Dendritic cell treated with granulocyte-macrophage colony-stimulating factor and Interleukin-4, amounts not matched to agents 40 ng/mL and 50 ng/mL, for 4 days (primary cell): ENCODE measurements at regions of chr19 and their contacts with region 1.

Region 1: GRCh38 chr19:37466798-37467607 is at the start of gene ZNF569:
- H3K4me3 Mint-ChIP-seq: peak within 1 kb of the TSS; percentile 96
- H3K27ac Mint-ChIP-seq: peak within 1 kb of the TSS; percentile 94
- H3K4me1 Mint-ChIP-seq: peaks cover 23% of the 10 kb centered on the region
- H3K27me3 Mint-ChIP-seq: no peaks in the 10 kb centered on the region

Region 2: GRCh38 chr19:36665832-36666231 is 801.2 kb before region 1 on chr19:
- intact Hi-C with region 1: loop called (anchors 5 kb)
- H3K4me3 Mint-ChIP-seq: peak overlapping the region; percentile 98
- H3K27ac Mint-ChIP-seq: peak overlapping the region; percentile 97
- H3K4me1 Mint-ChIP-seq: peaks cover 22% of the 10 kb centered on the region
- H3K27me3 Mint-ChIP-seq: no peaks in the 10 kb centered on the region

Region 3: DNA sequence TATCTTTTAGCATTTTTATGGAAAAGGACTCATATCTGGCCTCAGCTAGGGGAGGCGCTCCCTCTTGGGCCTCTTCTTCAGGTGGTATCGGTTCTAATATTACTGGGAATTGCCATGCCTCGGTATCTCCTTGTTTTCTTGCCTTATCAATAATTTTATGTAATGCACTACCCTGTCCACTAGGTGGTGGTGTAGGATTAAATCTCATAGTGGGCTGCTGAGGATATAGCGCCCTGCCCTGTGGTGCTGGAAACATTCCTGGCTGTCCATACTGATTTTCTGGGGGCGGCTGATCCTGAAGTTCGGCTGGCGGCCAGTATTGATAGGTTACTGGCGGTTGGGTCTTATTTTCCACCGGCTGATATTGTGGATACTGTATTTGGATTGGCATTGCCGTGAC is 353.0 kb before region 1 on chr19:
- intact Hi-C with region 1: no loop called
- H3K4me3 Mint-ChIP-seq: no peak overlapping the region
- H3K27ac Mint-ChIP-seq: no peak overlapping the region
- H3K4me1 Mint-ChIP-seq: no peaks in the 10 kb centered on the region
- H3K27me3 Mint-ChIP-seq: no peaks in the 10 kb centered on the region

Region 4: GRCh38 chr19:37217855-37218591 is 249.0 kb before region 1 on chr19 and contains the start of gene ZNF383:
- intact Hi-C with region 1: loop called (anchors 10 kb)
- H3K4me3 Mint-ChIP-seq: peak within 1 kb of the TSS; percentile 96
- H3K27ac Mint-ChIP-seq: peak within 1 kb of the TSS; percentile 99
- H3K4me1 Mint-ChIP-seq: peaks cover 19% of the 10 kb centered on the region
- H3K27me3 Mint-ChIP-seq: no peaks in the 10 kb centered on the region

Region 5: DNA sequence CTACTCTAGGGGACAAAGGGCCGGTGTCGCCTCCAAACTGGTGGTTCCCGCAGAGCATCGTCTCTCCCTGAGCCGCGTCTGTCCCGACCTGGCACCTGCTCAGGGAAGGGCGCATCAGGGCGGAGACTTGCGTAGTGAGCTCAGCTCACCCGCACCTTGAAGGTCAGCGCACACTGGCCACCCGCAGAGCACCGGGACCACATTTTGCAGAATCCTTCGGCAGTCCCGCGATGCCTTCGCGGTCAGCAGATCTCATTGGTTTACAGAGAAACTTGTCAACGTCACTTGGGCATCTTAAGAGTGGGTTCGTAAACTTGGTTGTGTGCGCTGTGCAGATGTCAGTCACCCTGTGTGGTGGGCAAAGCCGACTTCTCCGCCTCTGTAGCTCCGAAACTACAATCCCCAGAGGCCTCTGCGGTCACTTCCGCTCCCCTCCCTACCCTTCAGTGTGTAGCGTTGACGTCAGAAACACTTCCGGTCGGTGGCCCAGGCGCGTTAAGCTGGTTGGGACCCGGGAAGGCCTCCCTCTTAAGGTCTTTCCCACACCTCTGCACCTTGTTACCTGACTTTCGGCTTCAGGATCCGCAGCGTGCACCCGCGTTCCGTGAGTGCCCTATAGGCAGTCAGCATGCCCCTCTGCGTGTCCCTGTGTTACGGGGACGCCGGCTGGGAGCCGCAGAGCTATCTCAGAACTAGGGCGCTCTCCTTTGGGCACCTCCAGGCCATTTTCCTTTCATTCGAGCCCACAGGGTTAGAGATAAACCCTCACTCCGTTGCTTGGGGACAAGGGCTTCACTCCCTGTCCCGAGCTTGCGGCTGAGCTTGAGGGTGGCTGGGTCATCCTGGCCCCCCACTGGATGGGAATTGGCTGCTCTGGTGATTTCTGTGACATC is 132.6 kb before region 1 on chr19:
- intact Hi-C with region 1: loop called (anchors 10 kb)
- H3K4me3 Mint-ChIP-seq: peak overlapping the region; percentile 95
- H3K27ac Mint-ChIP-seq: peak overlapping the region; percentile 91
- H3K4me1 Mint-ChIP-seq: peaks cover 14% of the 10 kb centered on the region
- H3K27me3 Mint-ChIP-seq: no peaks in the 10 kb centered on the region

Region 6: GRCh38 chr19:37370880-37371661 is 95.9 kb before region 1 on chr19 and contains the start of gene ZNF527:
- intact Hi-C with region 1: loop called (anchors 2 kb)
- H3K4me3 Mint-ChIP-seq: peak within 1 kb of the TSS; percentile 98
- H3K27ac Mint-ChIP-seq: peak within 1 kb of the TSS; percentile 98
- H3K4me1 Mint-ChIP-seq: peaks cover 9% of the 10 kb centered on the region
- H3K27me3 Mint-ChIP-seq: no peaks in the 10 kb centered on the region

Region 7: GRCh38 chr19:37551129-37551993 is 84.4 kb after region 1 on chr19:
- intact Hi-C with region 1: no loop called
- H3K4me3 Mint-ChIP-seq: peak overlapping the region; percentile 79
- H3K27ac Mint-ChIP-seq: peak overlapping the region; percentile 71
- H3K4me1 Mint-ChIP-seq: peaks cover 13% of the 10 kb centered on the region
- H3K27me3 Mint-ChIP-seq: no peaks in the 10 kb centered on the region

Region 8: DNA sequence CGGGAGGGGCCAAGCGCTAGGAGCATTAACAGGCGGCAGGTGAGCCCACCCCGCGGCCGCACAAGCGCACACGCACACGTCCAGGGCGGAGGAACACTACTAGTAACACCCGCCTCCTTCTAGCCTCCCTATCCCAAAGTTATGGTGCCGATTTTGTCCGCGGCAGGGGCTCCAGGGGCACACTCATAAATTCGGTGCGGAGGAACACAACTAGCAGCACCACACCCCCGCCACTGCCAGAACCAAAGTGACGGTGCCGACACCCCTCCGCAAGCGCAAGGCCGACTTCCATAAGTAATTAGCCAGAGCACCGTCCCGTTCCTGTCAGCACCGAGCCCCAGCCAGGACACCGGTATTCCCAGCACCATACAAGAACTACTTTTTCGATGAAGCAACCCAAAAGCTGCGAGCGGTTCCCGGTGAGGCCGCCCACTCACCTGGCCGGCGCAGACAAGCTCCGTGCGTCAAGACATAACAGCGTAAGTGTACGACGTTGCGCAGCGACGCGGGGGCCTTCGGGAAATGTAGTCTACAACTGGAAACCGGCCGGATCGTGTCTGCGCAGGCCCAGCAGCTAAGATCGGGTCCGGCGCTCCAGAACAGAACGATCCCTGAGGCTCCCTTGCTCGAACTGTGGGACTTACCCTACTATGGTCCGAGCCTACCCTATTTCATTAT is 127.4 kb after region 1 on chr19 and contains the starts of genes ZNF540 and ZNF571:
- intact Hi-C with region 1: loop called (anchors 2 kb)
- H3K4me3 Mint-ChIP-seq: peak within 1 kb of the TSS; percentile 95
- H3K27ac Mint-ChIP-seq: peak within 1 kb of the TSS; percentile 82
- H3K4me1 Mint-ChIP-seq: peaks cover 19% of the 10 kb centered on the region
- H3K27me3 Mint-ChIP-seq: peaks cover 6% of the 10 kb centered on the region